ENCODE measurements at regions of chr2 and their contacts with region 1.

Region 1: GRCh38 chr2:99442837-99443236 is 47.0 kb downstream of the REV1 start:
- DNase-seq: no peak
- ATAC-seq: peak; percentile 62
- H3K4me3 ChIP-seq: no peak overlapping the region
- H3K27ac ChIP-seq: no peak overlapping the region
- H3K4me1 ChIP-seq: no peaks in the 10 kb centered on the region
- H3K27me3 ChIP-seq: no peaks in the 10 kb centered on the region
- CTCF ChIP-seq: no peak
- EP300 ChIP-seq: no peak
- POLR2A ChIP-seq: no peak
- RAD21 ChIP-seq: no peak

Region 2: GRCh38 chr2:99141110-99142108 is 301.4 kb before region 1 on chr2 and contains the start of gene C2orf15:
- CTCF ChIA-PET with region 1: no interaction called
- POLR2A ChIA-PET with region 1: no interaction called
- in situ Hi-C with region 1: no loop called
- intact Hi-C with region 1: no loop called
- DNase-seq: peak; percentile 94
- ATAC-seq: peak; percentile 93
- H3K4me3 ChIP-seq: peak within 1 kb of the TSS; percentile 75 to 92 (median 85)
- H3K27ac ChIP-seq: peak within 1 kb of the TSS; percentile 74
- H3K4me1 ChIP-seq: peaks cover 28% of the 10 kb centered on the region
- H3K27me3 ChIP-seq: no peaks in the 10 kb centered on the region
- CTCF ChIP-seq: no peak; the same call in 1 of the 2 replicates
- EP300 ChIP-seq: 0 out of 4 replicates have a peak, but pooled peaks of 1 of the 2 experiments have one; percentile 1
- POLR2A ChIP-seq: peak; percentile 89 to 99
- RAD21 ChIP-seq: no peak
- total RNA-seq, gene C2orf15: 8.3 and 12.2 TPM in 2 replicates

Region 3: GRCh38 chr2:99377879-99378278 is 65.0 kb before region 1 on chr2:
- CTCF ChIA-PET with region 1: no interaction called
- POLR2A ChIA-PET with region 1: no interaction called
- in situ Hi-C with region 1: no loop called
- intact Hi-C with region 1: no loop called
- DNase-seq: no peak
- ATAC-seq: no peak
- H3K4me3 ChIP-seq: no peak overlapping the region
- H3K27ac ChIP-seq: no peak overlapping the region
- H3K4me1 ChIP-seq: peaks cover 15% of the 10 kb centered on the region
- H3K27me3 ChIP-seq: no peaks in the 10 kb centered on the region
- CTCF ChIP-seq: no peak
- EP300 ChIP-seq: no peak
- POLR2A ChIP-seq: no peak
- RAD21 ChIP-seq: no peak

Region 4: GRCh38 chr2:99489761-99490622 is 47.2 kb after region 1 on chr2 and contains the start of gene REV1:
- CTCF ChIA-PET with region 1: interaction called, 4 read pairs
- POLR2A ChIA-PET with region 1: no interaction called
- in situ Hi-C with region 1: no loop called
- intact Hi-C with region 1: loop called (anchors 5 kb)
- DNase-seq: peak; percentile 91
- ATAC-seq: peak; percentile 86
- H3K4me3 ChIP-seq: peak within 1 kb of the TSS; percentile 79 to 99 (median 97)
- H3K27ac ChIP-seq: peak within 1 kb of the TSS; percentile 76
- H3K4me1 ChIP-seq: peaks cover 42% of the 10 kb centered on the region
- H3K27me3 ChIP-seq: no peaks in the 10 kb centered on the region; a peak in 3 of 5 replicates
- CTCF ChIP-seq: peak; percentile 93
- EP300 ChIP-seq: peak in 1 of 2 experiments; percentile 23; a peak in 2 of 4 replicates
- POLR2A ChIP-seq: peak in 1 of 2 experiments; percentile 80; a peak in 3 of 4 replicates
- RAD21 ChIP-seq: peak; percentile 94
- total RNA-seq, gene REV1: 38.5 and 49.1 TPM in 2 replicates

Region 5: DNA sequence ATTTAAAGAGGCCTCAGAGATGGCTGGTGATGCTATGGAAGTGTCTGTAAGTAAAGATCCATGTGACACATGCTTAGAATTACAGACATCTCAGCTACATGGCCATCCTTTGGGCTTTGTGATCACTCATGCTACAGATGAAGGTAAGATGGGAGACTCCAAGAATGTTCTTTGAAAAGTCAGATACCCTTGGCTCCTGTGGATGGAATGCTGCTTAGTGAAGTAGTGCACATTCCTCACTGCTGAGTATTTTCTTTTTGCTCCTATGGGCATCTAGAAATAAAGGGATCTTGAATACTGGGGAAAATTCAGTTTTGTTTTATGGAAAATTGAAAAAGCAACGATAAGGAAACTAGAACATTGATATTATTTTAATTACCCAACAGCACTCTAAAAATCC is 102.2 kb after region 1 on chr2:
- CTCF ChIA-PET with region 1: no interaction called
- POLR2A ChIA-PET with region 1: no interaction called
- in situ Hi-C with region 1: no loop called
- intact Hi-C with region 1: no loop called
- DNase-seq: no peak
- ATAC-seq: no peak
- H3K4me3 ChIP-seq: no peak overlapping the region
- H3K27ac ChIP-seq: no peak overlapping the region
- H3K4me1 ChIP-seq: no peaks in the 10 kb centered on the region
- H3K27me3 ChIP-seq: peaks cover 1 to 5% of the 10 kb centered on the region in 2 experiments; a peak in 1 of 5 replicates
- CTCF ChIP-seq: no peak
- EP300 ChIP-seq: no peak
- POLR2A ChIP-seq: no peak
- RAD21 ChIP-seq: no peak